ENCODE measurements at regions of chr6 and their contacts with region 1.

Region 1: DNA sequence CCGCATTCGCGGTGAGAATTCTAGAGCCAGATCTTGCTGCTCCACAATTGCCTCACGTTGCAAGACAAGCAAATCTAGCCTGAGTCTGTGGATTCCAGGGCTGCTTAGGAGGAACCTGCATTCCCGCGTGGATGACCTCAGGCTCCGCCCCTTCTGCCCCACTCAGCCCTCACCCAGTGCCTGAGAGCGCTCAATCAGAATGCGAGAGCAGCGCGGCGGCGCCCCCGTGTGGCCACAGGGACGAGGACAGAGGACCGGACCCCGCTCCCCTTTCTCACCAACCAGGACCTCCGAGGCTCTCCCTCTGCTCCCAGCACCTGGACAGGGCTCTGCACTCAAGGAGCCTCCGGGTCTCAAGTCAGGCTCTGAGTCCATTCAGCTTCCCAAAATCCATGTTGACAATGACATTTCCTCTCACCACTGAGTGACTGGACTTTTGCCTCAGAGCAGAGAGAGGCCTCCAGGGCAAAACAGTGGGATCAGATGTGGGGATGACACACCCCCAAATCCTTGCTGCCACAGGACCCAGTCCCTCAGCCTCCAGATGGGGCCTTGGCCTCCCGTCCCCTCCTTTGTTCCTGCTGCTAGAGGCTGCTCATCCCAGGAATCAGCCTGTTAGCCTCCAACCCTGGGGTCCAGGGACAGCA is 52.0 kb downstream of the RPP21 start:
- DNase-seq: peak; percentile 47
- ATAC-seq: peak; percentile 100
- H3K4me3 ChIP-seq: no peak overlapping the region
- H3K27ac ChIP-seq: no peak overlapping the region
- H3K4me1 ChIP-seq: no peaks in the 10 kb centered on the region
- H3K27me3 ChIP-seq: peaks cover 18% of the 10 kb centered on the region
- CTCF ChIP-seq: peak; percentile 82
- POLR2A ChIP-seq: no peak
- RAD21 ChIP-seq: peak; percentile 77

Region 2: GRCh38 chr6:30006170-30007131 is 390.5 kb before region 1 on chr6:
- CTCF ChIA-PET with region 1: no interaction called
- POLR2A ChIA-PET with region 1: no interaction called
- dilution Hi-C with region 1: no loop called
- in situ Hi-C with region 1: no loop called
- intact Hi-C with region 1: no loop called
- DNase-seq: peak; percentile 3
- ATAC-seq: peak; percentile 71
- H3K4me3 ChIP-seq: peak overlapping the region; percentile 50
- H3K27ac ChIP-seq: no peak overlapping the region
- H3K4me1 ChIP-seq: no peaks in the 10 kb centered on the region; the same call in 1 of the 2 replicates
- H3K27me3 ChIP-seq: peaks cover 36% of the 10 kb centered on the region
- CTCF ChIP-seq: no peak
- POLR2A ChIP-seq: no peak
- RAD21 ChIP-seq: no peak

Region 3: DNA sequence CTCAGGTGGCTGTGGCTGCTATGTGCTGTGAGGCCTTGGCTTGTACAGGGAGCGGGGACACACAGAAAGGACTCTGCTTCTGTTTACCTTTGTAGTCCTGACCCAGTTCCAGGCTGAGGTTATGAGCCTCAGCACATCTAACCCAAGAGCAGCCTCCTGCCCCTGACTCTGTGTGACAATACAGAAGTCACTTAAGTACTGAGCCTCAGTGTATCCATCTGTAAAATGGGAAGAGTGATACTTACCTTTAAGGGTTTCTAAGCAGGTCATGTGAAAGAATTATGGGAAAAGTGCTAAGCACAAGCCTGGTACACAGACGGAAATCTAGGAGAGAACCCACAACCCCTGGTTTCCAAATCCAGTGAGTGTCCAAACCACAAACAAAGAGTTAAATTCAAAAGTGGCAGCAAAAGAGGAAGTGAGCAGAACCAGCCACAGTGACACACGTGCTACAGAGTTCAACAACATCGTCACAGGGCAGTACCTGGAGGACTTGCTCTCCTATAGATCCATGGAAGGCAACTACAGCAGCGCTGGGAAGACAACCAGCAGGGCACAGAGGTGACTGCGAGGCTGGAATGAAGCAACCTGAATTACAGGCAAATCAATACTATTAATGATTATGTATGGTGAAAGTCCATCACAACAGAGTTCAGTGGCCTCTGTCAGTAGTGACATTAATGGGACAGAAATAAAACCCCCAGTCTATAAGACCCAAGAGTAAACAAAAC is 196.2 kb before region 1 on chr6:
- CTCF ChIA-PET with region 1: no interaction called
- POLR2A ChIA-PET with region 1: no interaction called
- dilution Hi-C with region 1: no loop called
- in situ Hi-C with region 1: no loop called
- intact Hi-C with region 1: no loop called
- DNase-seq: no peak
- ATAC-seq: no peak
- H3K4me3 ChIP-seq: no peak overlapping the region
- H3K27ac ChIP-seq: no peak overlapping the region
- H3K4me1 ChIP-seq: no peaks in the 10 kb centered on the region
- H3K27me3 ChIP-seq: no peaks in the 10 kb centered on the region
- CTCF ChIP-seq: no peak
- POLR2A ChIP-seq: no peak
- RAD21 ChIP-seq: no peak

Region 4: DNA sequence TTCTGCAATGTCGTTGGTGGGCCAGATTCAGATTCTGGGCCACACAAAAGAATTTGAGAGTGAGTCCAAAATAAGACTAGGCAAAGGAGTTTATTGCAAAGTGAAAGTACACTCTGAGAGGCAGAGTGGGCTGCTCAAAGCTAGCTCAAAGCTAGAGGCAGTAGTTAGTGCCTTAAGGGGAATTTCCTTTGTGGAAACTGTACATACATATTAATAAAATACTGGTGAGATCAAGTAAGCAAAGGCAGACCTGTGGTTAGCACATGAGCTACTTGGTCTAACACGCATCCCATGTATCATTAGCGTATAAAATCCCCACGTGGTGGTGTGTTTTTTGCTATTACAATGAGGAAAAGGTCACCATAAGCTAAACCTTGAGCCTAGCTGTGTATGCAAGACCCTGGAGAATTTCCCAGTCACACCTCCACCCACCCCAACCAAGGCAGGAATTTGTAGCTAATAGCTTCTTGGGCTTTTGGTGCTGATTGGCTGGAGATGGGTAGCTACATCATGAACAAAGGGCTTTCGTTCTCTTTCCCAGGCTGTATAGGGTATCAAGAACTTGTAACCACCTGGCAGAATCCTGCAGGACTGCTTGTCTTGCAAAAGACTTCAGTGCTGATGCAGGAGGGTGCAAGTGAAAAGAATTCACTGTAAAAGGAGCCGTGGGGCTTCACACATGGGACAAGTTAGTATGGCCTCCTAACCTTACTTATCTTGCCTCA is 169.0 kb before region 1 on chr6:
- CTCF ChIA-PET with region 1: no interaction called
- POLR2A ChIA-PET with region 1: no interaction called
- dilution Hi-C with region 1: no loop called
- in situ Hi-C with region 1: loop called (anchors 10 kb)
- intact Hi-C with region 1: no loop called
- DNase-seq: no peak
- ATAC-seq: no peak
- H3K4me3 ChIP-seq: no peak overlapping the region
- H3K27ac ChIP-seq: no peak overlapping the region
- H3K4me1 ChIP-seq: no peaks in the 10 kb centered on the region
- H3K27me3 ChIP-seq: peaks cover 5% of the 10 kb centered on the region; the same call in 1 of the 2 replicates
- CTCF ChIP-seq: no peak
- POLR2A ChIP-seq: no peak
- RAD21 ChIP-seq: no peak

Region 5: GRCh38 chr6:30238174-30238795 is 158.7 kb before region 1 on chr6:
- CTCF ChIA-PET with region 1: no interaction called
- POLR2A ChIA-PET with region 1: no interaction called
- dilution Hi-C with region 1: no loop called
- in situ Hi-C with region 1: no loop called
- intact Hi-C with region 1: loop called (anchors 1 kb)
- DNase-seq: peak; percentile 31
- ATAC-seq: peak; percentile 71; the same call in 1 of the 2 replicates
- H3K4me3 ChIP-seq: no peak overlapping the region
- H3K27ac ChIP-seq: no peak overlapping the region
- H3K4me1 ChIP-seq: no peaks in the 10 kb centered on the region
- H3K27me3 ChIP-seq: peaks cover 6% of the 10 kb centered on the region; the same call in 1 of the 2 replicates
- CTCF ChIP-seq: peak; percentile 40
- POLR2A ChIP-seq: no peak
- RAD21 ChIP-seq: peak; percentile 47

Region 6: DNA sequence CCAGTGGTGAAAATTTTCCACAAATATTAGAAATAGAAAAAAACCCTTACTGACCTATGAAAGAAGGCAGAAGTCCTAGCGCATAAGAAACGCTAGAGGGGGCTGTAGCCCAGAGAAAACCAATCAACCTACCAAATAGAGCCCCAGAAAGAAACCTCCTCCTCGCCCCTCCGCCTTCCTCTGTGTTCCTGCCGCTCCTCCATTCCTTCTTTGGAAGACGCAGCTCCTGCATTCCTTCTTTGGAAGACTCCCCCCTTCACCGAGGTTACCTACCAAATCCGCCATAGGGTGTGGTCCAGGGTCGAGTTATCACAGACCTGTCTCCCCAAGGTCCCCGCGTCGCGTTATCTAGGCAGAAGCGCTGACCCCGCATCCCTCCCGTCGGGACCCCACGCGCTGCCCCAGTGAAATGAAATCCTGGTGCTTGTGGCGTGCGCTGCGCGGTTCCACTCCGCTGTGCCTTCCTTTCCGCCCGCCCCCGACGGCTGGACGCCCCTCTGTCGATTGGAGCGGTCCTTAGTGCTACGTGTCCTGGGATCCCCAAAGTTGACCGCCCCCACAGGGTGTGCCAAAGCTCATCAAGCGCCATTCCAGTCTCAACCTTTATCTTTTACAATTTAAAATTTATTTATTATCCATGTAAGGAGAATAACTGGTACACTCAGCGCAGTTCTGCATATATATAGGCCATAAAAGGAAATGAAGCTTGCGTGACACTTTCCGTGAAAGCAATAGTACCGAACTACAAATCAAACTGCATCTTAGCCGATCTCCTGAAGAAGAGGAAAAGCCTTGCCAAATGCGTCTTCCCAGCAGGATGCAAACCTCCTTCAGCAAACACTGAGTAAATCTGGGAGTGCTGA is 39.0 kb before region 1 on chr6:
- CTCF ChIA-PET with region 1: interaction called, 3 read pairs
- POLR2A ChIA-PET with region 1: no interaction called
- dilution Hi-C with region 1: no loop called
- in situ Hi-C with region 1: no loop called
- intact Hi-C with region 1: loop called (anchors 1 kb)
- DNase-seq: peak; percentile 74
- ATAC-seq: peak; percentile 96
- H3K4me3 ChIP-seq: peak overlapping the region; percentile 38
- H3K27ac ChIP-seq: no peak overlapping the region
- H3K4me1 ChIP-seq: no peaks in the 10 kb centered on the region
- H3K27me3 ChIP-seq: peaks cover 53% of the 10 kb centered on the region
- CTCF ChIP-seq: peak; percentile 79
- POLR2A ChIP-seq: no peak
- RAD21 ChIP-seq: peak; percentile 63

Measured in IMR-90 (cell line).